Mammary epithelial cell (primary cell): ENCODE measurements at regions of chr16 and their contacts with region 1.

Region 1: GRCh38 chr16:58110571-58111301 is 18.4 kb downstream of the CFAP20 start:
- DNase-seq: peak; percentile 47
- H3K4me3 ChIP-seq: no peak overlapping the region
- H3K27ac ChIP-seq: no peak overlapping the region
- H3K4me1 ChIP-seq: peaks cover 11% of the 10 kb centered on the region
- H3K27me3 ChIP-seq: no peaks in the 10 kb centered on the region
- CTCF ChIP-seq: peak in 1 of 2 donors; percentile 10

Region 2: GRCh38 chr16:57564571-57565270 is 546.0 kb before region 1 on chr16:
- CTCF ChIA-PET with region 1: no interaction called
- dilution Hi-C with region 1: loop called (anchors 25 kb)
- in situ Hi-C with region 1: no loop called
- intact Hi-C with region 1: no loop called
- DNase-seq: peak; percentile 10
- H3K4me3 ChIP-seq: no peak overlapping the region
- H3K27ac ChIP-seq: no peak overlapping the region
- H3K4me1 ChIP-seq: no peaks in the 10 kb centered on the region
- H3K27me3 ChIP-seq: no peaks in the 10 kb centered on the region
- CTCF ChIP-seq: no peak

Region 3: DNA sequence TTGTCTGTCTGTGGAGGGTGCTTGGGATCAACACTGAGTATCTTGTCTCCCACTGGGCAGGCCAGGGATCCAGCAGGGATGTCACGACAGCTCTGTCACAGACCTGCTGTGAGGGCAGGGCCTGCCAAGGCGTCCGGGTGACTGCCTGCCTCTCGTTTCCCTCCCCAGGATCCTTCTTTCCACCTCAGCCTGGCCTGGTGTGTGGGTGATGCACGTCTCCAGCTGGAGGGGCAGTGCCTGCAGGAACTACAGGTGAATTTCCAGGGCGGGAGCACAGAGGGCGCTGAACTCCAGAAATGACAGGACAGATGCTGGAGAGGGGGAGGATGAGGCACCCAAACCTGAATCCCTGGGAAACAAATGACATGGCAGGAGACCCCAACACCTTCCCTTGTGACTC is 91.9 kb before region 1 on chr16:
- CTCF ChIA-PET with region 1: no interaction called
- dilution Hi-C with region 1: loop called (anchors 5 kb)
- in situ Hi-C with region 1: loop called in 1 of 2 experiments (anchors 10 kb)
- intact Hi-C with region 1: no loop called
- DNase-seq: no peak
- H3K4me3 ChIP-seq: no peak overlapping the region
- H3K27ac ChIP-seq: no peak overlapping the region
- H3K4me1 ChIP-seq: peaks cover 18% of the 10 kb centered on the region
- H3K27me3 ChIP-seq: no peaks in the 10 kb centered on the region
- CTCF ChIP-seq: no peak

Region 4: DNA sequence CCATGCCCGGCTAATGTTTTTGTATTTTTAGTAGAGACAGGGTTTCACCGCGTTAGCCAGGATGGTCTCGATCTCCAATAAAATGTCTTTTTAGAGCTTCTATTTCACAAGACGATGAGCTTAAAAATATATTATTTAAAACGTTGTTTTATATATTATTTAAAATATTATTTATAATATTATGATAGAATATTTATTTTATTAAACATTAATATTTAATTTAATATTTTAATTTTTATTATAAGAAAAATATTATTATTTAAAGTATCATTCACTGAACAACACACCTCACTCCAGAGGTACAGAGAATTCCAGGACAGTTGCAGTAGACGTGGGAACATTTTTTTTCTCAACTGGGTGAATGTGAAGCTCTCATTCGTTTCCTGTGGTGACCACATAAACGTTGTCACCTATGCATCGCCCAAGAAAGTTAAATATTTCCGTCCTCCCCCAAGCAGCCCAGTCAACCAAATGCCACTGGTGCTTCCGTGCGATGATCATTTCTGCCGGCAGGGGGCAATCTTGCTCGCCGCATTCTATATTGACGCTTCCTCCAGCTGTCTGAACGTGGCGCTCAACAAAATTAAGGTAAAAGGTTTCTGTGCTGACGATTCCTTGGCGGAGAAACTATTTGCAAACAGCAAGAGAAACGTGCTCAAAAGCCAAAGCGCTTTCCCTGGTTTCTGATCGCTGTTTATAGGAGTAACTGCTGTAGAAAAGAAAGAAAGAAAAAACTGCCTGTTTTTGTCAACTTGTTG is 225.8 kb after region 1 on chr16:
- CTCF ChIA-PET with region 1: no interaction called
- dilution Hi-C with region 1: no loop called
- in situ Hi-C with region 1: no loop called
- intact Hi-C with region 1: no loop called
- DNase-seq: peak; percentile 62
- H3K4me3 ChIP-seq: no peak overlapping the region
- H3K27ac ChIP-seq: no peak overlapping the region
- H3K4me1 ChIP-seq: no peaks in the 10 kb centered on the region
- H3K27me3 ChIP-seq: no peaks in the 10 kb centered on the region
- CTCF ChIP-seq: peak; percentile 87 to 93

Region 5: DNA sequence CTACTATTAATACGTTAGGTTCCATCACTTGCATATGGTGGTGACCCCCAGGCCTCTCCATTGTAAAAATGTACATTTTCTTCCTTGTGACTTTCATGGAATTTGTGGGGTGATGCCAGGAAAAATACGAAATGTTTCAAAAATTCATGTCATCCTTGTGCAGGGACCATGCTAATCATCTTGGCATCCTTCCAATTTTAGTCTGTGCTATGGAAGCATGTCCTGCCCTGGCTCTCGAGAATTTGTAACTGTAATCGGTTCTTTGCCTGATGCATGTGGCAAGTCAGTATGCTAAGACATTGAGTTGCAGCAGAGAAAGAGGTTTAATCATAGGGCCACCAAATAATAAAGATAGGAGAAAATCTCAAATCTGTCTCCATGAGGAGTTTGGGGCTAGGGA is 267.2 kb after region 1 on chr16:
- CTCF ChIA-PET with region 1: no interaction called
- dilution Hi-C with region 1: no loop called
- in situ Hi-C with region 1: no loop called
- intact Hi-C with region 1: no loop called
- DNase-seq: no peak
- H3K4me3 ChIP-seq: no peak overlapping the region
- H3K27ac ChIP-seq: no peak overlapping the region
- H3K4me1 ChIP-seq: peaks cover 4% of the 10 kb centered on the region
- H3K27me3 ChIP-seq: no peaks in the 10 kb centered on the region
- CTCF ChIP-seq: no peak